Tibial artery (tissue), 4 donors: ENCODE measurements at regions of chr2 and their contacts with region 1.

Region 1: DNA sequence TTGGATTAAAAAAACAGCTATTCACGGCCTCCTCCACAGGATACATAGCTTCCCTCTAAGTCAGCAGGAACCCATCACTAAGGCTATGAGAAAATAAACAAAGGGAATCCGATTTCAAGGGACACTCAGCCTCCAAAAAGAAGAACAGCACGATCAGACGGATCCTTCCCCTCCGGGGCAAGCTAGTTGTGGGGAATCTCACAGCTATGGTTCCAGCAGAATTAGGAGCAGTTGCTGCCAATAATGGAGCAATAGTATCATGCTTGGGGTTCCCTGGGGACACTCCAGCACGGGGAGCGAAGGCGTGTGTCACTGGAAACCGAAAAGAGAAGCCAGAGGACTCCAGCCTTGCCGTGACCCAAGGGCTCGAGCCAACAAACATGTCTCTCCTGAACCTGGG is 163.1 kb downstream of the TTC32 start:
- DNase-seq: peak; percentile 89 to 93
- H3K4me3 ChIP-seq: no peak overlapping the region
- H3K27ac ChIP-seq: peak overlapping the region; percentile 75 to 86
- H3K4me1 ChIP-seq: peaks cover 0 to 49% (median 22%) of the 10 kb centered on the region in 4 donors
- H3K27me3 ChIP-seq: no peaks in the 10 kb centered on the region
- CTCF ChIP-seq: no peak

Region 2: DNA sequence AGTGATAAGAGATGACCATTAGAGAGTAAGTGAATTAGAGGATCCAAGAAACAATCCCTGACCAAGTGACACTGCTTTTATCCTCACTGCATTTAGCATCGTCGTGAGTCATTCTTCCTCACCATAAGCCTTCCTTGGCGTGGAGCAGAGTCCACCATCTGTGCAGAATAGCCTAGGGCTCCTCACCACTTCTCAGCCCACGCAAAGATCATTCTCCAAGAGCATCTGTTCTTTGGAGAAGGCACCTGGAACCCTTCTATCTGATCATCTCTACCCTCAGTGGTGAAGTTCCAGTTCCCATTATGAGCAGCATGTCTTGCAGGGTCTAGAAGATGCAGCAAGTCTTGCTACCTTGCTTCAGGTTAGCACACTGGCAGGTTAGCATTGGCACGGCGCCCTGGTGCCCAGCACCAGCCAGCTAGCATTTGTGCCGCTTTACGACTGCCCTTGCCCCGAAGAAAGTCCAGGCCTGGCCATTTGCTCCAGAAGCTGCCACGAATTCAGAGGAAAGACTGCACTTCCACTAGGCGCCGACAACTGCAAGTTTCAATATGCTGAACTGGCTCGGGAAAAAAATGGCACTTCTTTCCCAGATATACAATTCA is 62.7 kb before region 1 on chr2:
- intact Hi-C with region 1: loop called (anchors 5 kb)
- DNase-seq: no peak
- H3K4me3 ChIP-seq: no peak overlapping the region
- H3K27ac ChIP-seq: no peak overlapping the region
- H3K4me1 ChIP-seq: peaks cover 0 to 44% (median 34%) of the 10 kb centered on the region in 4 donors
- H3K27me3 ChIP-seq: no peaks in the 10 kb centered on the region
- CTCF ChIP-seq: no peak